ENCODE measurements at regions of chr17 and their contacts with region 1.

Region 1: DNA sequence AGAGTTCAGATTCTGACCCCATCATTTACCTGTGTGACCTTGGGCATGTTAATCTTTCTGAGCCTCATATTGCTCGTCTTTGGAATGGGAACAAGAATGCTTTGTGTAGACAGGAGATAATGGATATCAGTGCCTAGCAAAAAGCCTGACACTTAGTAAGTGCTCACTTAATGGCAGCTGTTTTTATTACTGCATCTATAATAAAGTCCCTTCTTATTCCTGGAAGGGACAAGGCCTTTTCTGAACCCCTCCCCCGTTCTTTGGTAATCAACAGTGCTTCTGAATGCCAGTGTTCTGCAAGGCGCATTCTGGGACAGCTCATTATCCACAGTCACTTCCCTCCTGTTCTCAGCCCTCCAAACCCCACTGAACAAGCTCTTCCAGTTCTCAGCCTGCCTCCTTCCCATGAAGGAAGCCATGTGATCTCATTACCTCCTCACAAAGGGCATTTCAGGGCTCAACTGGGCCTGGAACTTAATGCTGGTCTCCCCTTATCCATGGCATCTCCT is 25.1 kb upstream of the SUPT4H1 start:
- DNase-seq: no peak
- ATAC-seq: no peak
- H3K4me3 ChIP-seq: no peak overlapping the region
- H3K27ac ChIP-seq: no peak overlapping the region
- H3K4me1 ChIP-seq: peaks cover 0 to 17% (median 0%) of the 10 kb centered on the region in 12 donors
- H3K27me3 ChIP-seq: no peaks in the 10 kb centered on the region
- CTCF ChIP-seq: no peak
- POLR2A ChIP-seq: no peak

Region 2: DNA sequence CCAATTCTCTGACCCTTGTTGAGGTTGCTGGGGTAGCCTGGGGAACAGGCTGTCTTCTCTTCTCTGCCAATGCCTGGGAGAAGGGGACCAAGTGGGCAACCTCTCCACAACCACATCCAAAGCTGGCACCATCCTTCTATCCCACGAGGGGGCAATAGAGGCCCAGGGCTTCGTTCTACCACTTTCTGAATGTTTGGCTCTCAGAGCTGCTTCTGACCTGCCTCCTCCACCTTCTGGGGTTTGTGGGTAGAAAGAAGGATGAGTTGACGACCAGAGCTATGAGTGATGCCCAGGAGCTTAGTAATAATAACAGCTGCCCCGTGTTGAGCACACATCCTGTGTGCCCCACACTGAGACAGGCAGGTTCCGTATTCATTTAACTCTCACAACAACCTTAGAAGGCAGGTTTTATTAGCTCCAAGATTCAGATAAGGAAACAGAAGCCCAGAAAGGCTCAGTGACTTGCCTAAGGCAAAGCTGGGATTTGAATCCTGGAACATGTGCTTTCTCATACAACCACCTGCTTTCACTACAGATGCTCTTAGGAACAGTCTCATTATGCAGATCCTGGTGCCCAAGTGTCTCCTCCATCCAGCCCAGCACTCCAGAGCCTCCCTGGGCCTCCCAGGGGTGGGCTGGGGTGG is 59.6 kb before region 1 on chr17:
- intact Hi-C with region 1: loop called in 1 of 10 experiments (anchors 10 kb)
- DNase-seq: peak in 3 of 5 donors; percentile 23 to 44 (median 30)
- ATAC-seq: peak in 3 of 4 donors; percentile 50 to 63 (median 51)
- H3K4me3 ChIP-seq: no peak overlapping the region
- H3K27ac ChIP-seq: peak overlapping the region in 1 of 12 donors; percentile 48
- H3K4me1 ChIP-seq: peaks cover 0 to 3% (median 0%) of the 10 kb centered on the region in 12 donors
- H3K27me3 ChIP-seq: no peaks in the 10 kb centered on the region
- CTCF ChIP-seq: peak in 11 of 12 donors; percentile 23 to 60 (median 43)
- POLR2A ChIP-seq: no peak

Measured in heart left ventricle (tissue), 16 donors.